Activated CD4-positive, alpha-beta memory T cell treated with anti-CD3 and anti-CD28 coated beads, Interleukin-2, amount 10 ng/mL, durations not matched to agents 7 days and 5 days (primary cell): ENCODE measurements at regions of chr7 and their contacts with region 1.

Region 1: GRCh38 chr7:116525913-116526861 is 1.4 kb downstream of the CAV1 start:
- DNase-seq: peak; percentile 70
- H3K4me3 Mint-ChIP-seq: peak overlapping the region; percentile 75
- H3K27ac Mint-ChIP-seq: no peak overlapping the region
- H3K4me1 Mint-ChIP-seq: peaks cover 25% of the 10 kb centered on the region
- H3K27me3 Mint-ChIP-seq: peaks cover 75% of the 10 kb centered on the region

Region 2: DNA sequence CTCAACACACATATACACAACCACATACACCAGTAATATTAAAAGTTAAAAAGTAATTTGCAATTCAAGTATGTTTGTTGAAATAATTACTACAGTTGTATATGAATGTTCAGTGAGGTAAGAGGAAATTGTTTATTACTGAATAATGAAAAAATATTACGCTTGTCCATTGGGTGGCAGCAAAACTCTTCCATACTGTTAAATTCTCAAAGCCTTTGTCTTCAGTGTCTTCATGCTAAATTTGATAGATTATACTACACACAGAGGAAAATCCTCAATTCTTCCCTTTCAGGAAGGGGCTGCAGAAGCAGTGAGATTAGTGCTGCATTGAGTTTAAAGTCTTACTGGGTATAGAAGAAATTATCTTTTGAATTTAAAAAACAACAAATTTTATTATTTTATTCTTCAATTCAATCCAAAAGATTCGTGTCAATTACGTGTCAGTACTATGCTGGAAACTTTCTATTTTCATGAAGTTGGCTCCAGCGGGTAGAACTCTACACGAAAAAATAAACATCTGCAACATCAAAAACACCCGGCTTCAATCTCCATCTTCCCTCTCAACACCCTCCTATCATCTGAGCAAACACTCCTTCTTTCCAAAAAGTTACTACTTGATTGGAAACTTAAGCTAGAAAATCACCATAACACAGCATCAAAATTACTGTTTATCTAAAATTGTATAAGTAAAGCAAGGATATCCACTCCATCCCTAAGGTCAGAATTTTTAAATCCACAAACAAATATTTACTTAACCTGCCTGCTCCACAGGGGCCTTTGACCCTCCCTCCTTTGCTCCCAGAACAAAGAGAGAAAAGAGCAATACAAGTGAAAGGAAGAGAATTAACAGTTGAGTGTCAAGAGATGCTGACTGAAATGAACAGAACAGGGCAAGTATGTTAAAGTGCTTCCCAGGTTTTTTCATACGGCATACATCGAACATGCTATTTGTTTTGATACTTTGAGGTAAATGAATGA is 352.8 kb before region 1 on chr7:
- CTCF ChIA-PET with region 1: interaction called, 16 read pairs
- POLR2A ChIA-PET with region 1: no interaction called
- DNase-seq: no peak
- H3K4me3 Mint-ChIP-seq: no peak overlapping the region
- H3K27ac Mint-ChIP-seq: no peak overlapping the region
- H3K4me1 Mint-ChIP-seq: peaks cover 7% of the 10 kb centered on the region
- H3K27me3 Mint-ChIP-seq: peaks cover 27% of the 10 kb centered on the region

Region 3: DNA sequence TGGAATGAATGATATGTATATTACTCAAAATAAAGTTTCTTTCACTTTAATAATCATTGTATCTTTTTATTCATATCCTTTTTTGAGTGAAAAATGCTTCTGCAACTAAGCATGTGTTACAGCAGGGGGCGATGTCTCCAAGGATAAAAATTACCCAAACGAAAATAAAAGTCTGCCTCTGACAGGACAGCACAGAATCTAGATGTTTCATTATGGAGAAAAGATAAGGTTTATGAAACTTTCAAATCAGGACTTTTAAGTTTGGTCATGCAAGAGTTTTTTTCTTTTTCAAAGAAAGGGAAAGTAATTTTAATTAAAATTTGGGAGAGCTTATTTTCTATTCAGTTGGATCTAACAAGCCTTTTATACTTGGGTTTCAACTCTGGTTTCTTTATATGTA is 267.5 kb before region 1 on chr7:
- CTCF ChIA-PET with region 1: interaction called, 15 read pairs
- POLR2A ChIA-PET with region 1: no interaction called
- DNase-seq: no peak
- H3K4me3 Mint-ChIP-seq: no peak overlapping the region
- H3K27ac Mint-ChIP-seq: no peak overlapping the region
- H3K4me1 Mint-ChIP-seq: peaks cover 11% of the 10 kb centered on the region
- H3K27me3 Mint-ChIP-seq: peaks cover 4% of the 10 kb centered on the region

Region 4: DNA sequence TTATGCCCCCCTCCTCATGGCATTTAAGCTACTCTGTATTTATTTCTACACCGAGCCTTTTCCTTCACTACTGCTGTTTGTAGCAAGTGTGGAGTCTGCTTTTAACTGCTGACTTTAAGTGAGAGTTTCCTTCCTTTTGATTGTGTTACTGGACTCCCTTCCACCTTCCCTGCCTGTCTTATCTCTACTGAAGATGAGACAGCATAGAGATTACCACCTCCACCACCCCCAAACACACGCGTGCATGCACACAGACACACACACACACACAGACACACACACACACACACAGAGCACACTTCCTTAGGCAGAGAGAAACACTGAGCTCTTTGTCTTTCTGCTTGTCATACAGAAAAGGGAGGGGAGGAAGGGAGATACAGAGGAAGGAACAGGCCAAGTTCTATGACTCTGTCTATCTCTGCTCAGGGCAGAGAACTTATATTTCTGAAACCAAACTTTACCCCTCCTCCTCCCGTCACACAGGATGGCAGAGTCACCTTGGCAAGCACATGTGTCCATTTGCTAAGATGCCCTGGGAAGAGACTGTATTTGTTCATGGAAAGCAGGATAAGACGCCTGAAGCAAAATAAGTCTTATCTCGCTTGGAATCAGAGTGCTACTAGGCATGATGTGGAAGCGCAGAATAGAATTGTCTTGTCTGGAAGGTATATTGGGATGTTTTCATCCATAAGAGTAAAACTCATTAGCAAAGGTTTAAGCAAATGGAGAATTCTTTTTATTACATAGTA is 108.4 kb before region 1 on chr7:
- CTCF ChIA-PET with region 1: no interaction called
- POLR2A ChIA-PET with region 1: no interaction called
- DNase-seq: no peak
- H3K4me3 Mint-ChIP-seq: no peak overlapping the region
- H3K27ac Mint-ChIP-seq: no peak overlapping the region
- H3K4me1 Mint-ChIP-seq: no peaks in the 10 kb centered on the region
- H3K27me3 Mint-ChIP-seq: no peaks in the 10 kb centered on the region

Region 5: GRCh38 chr7:116511552-116512519 is 14.4 kb before region 1 on chr7:
- CTCF ChIA-PET with region 1: interaction called, 14 read pairs
- POLR2A ChIA-PET with region 1: interaction called, 3 read pairs
- DNase-seq: peak; percentile 42
- H3K4me3 Mint-ChIP-seq: peak overlapping the region; percentile 75
- H3K27ac Mint-ChIP-seq: peak overlapping the region; percentile 70
- H3K4me1 Mint-ChIP-seq: peaks cover 18% of the 10 kb centered on the region
- H3K27me3 Mint-ChIP-seq: peaks cover 34% of the 10 kb centered on the region

Region 6: DNA sequence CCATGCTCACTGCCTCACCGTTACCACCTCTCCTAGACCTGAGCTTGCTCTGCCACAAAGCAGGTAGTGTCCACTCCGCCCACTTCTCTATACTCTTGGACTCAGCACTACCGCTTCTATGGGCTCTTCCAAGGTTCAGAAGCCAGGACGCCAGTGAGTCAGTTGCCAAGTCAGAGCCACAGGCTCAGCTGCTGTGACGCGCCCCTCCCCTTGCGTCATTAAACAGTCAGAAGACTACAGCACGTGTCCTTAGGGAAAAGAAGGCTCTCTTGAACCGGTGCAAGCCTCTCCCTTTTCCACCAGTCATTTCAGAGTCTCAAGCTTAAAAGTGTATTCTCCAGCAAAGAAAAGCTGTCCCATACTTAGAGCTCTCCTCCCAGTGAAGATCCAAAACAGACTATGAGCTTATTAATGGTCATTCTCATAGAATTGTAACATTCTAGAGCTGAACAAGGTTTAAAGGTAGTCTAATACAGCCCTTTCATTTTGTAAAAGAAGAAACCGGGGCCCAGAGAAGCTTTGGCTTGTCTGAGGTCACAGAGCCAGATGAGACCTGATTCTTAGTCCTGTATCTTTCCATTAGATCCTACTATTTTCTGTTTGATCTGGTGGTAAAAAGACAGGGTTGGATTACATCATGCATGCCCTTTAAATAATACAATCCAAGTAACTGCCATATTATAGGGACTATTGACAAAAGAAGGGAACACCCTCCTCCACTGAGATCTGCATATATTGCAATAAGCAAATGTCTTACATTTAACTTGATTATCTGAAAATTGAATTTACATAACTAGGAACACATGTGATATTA is 105.0 kb after region 1 on chr7:
- CTCF ChIA-PET with region 1: no interaction called
- POLR2A ChIA-PET with region 1: no interaction called
- DNase-seq: no peak
- H3K4me3 Mint-ChIP-seq: no peak overlapping the region
- H3K27ac Mint-ChIP-seq: no peak overlapping the region
- H3K4me1 Mint-ChIP-seq: no peaks in the 10 kb centered on the region
- H3K27me3 Mint-ChIP-seq: peaks cover 11% of the 10 kb centered on the region